ENCODE measurements at regions of chr12 and their contacts with region 1.

Region 1: GRCh38 chr12:47837190-47838171 is 17.8 kb upstream of the HDAC7 start:
- DNase-seq: peak; percentile 77
- H3K4me3 Mint-ChIP-seq: no peak overlapping the region
- H3K27ac Mint-ChIP-seq: peak overlapping the region; percentile 69
- H3K4me1 Mint-ChIP-seq: peaks cover 61% of the 10 kb centered on the region
- H3K27me3 Mint-ChIP-seq: no peaks in the 10 kb centered on the region

Region 2: GRCh38 chr12:47032644-47033043 is 804.8 kb before region 1 on chr12:
- CTCF ChIA-PET with region 1: no interaction called
- intact Hi-C with region 1: loop called (anchors 5 kb)
- DNase-seq: peak; percentile 34
- H3K4me3 Mint-ChIP-seq: no peak overlapping the region
- H3K27ac Mint-ChIP-seq: peak overlapping the region; percentile 79
- H3K4me1 Mint-ChIP-seq: peaks cover 43% of the 10 kb centered on the region
- H3K27me3 Mint-ChIP-seq: no peaks in the 10 kb centered on the region

Region 3: GRCh38 chr12:47734725-47735480 is 102.6 kb before region 1 on chr12:
- CTCF ChIA-PET with region 1: interaction called, 440 read pairs
- intact Hi-C with region 1: no loop called
- DNase-seq: no peak
- H3K4me3 Mint-ChIP-seq: no peak overlapping the region
- H3K27ac Mint-ChIP-seq: no peak overlapping the region
- H3K4me1 Mint-ChIP-seq: peaks cover 7% of the 10 kb centered on the region
- H3K27me3 Mint-ChIP-seq: no peaks in the 10 kb centered on the region

Region 4: GRCh38 chr12:47779301-47779942 is 58.1 kb before region 1 on chr12:
- CTCF ChIA-PET with region 1: interaction called, 376 read pairs
- intact Hi-C with region 1: loop called (anchors 1 kb)
- DNase-seq: peak; percentile 97
- H3K4me3 Mint-ChIP-seq: no peak overlapping the region
- H3K27ac Mint-ChIP-seq: peak overlapping the region; percentile 18
- H3K4me1 Mint-ChIP-seq: peaks cover 30% of the 10 kb centered on the region
- H3K27me3 Mint-ChIP-seq: no peaks in the 10 kb centered on the region

Region 5: GRCh38 chr12:47812797-47813510 is 24.5 kb before region 1 on chr12:
- CTCF ChIA-PET with region 1: interaction called, 848 read pairs
- intact Hi-C with region 1: loop called (anchors 1 kb)
- DNase-seq: peak; percentile 99
- H3K4me3 Mint-ChIP-seq: peak overlapping the region; percentile 88
- H3K27ac Mint-ChIP-seq: peak overlapping the region; percentile 98
- H3K4me1 Mint-ChIP-seq: peaks cover 75% of the 10 kb centered on the region
- H3K27me3 Mint-ChIP-seq: no peaks in the 10 kb centered on the region

Region 6: GRCh38 chr12:47963340-47964040 is 126.0 kb after region 1 on chr12 and contains the start of gene TMEM106C:
- CTCF ChIA-PET with region 1: interaction called, 4 read pairs
- intact Hi-C with region 1: loop called (anchors 2 kb)
- DNase-seq: peak; percentile 94
- H3K4me3 Mint-ChIP-seq: peak within 1 kb of the TSS; percentile 98
- H3K27ac Mint-ChIP-seq: peak within 1 kb of the TSS; percentile 79
- H3K4me1 Mint-ChIP-seq: peaks cover 30% of the 10 kb centered on the region
- H3K27me3 Mint-ChIP-seq: peaks cover 7% of the 10 kb centered on the region
- total RNA-seq, gene TMEM106C: 226 to 247 TPM

Region 7: GRCh38 chr12:48615681-48616080 is 778.2 kb after region 1 on chr12:
- CTCF ChIA-PET with region 1: no interaction called
- intact Hi-C with region 1: no loop called
- DNase-seq: no peak
- H3K4me3 Mint-ChIP-seq: no peak overlapping the region
- H3K27ac Mint-ChIP-seq: no peak overlapping the region
- H3K4me1 Mint-ChIP-seq: peaks cover 2% of the 10 kb centered on the region
- H3K27me3 Mint-ChIP-seq: peaks cover 11% of the 10 kb centered on the region

Measured in activated naive CD4-positive, alpha-beta T cell treated with anti-CD3 and anti-CD28 coated beads for 36 hours (primary cell).